Breast epithelium (tissue), 4 donors: ENCODE measurements at regions of chr11 and their contacts with region 1.

Region 1: GRCh38 chr11:62081378-62082291 is 42.2 kb upstream of the INCENP start:
- DNase-seq: peak; percentile 63 to 86
- H3K4me3 ChIP-seq: peak overlapping the region in 1 of 3 donors; percentile 31
- H3K27ac ChIP-seq: no peak overlapping the region
- H3K4me1 ChIP-seq: no peaks in the 10 kb centered on the region
- H3K27me3 ChIP-seq: no peaks in the 10 kb centered on the region
- CTCF ChIP-seq: peak; percentile 90 to 92 (median 91)
- POLR2A ChIP-seq: no peak

Region 2: GRCh38 chr11:61792310-61793085 is 289.1 kb before region 1 on chr11 and contains the starts of genes FEN1 and TMEM258:
- intact Hi-C with region 1: loop called (anchors 10 kb)
- DNase-seq: peak; percentile 90 to 92
- H3K4me3 ChIP-seq: peak within 1 kb of the TSS; percentile 74 to 89 (median 79)
- H3K27ac ChIP-seq: peak within 1 kb of the TSS; percentile 94 to 97
- H3K4me1 ChIP-seq: no peaks in the 10 kb centered on the region
- H3K27me3 ChIP-seq: no peaks in the 10 kb centered on the region
- CTCF ChIP-seq: peak; percentile 5 to 48 (median 21)
- POLR2A ChIP-seq: peak; percentile 80
- total RNA-seq, gene FEN1: 5.9 to 9.2 (median 8.5) TPM
- total RNA-seq, gene TMEM258: 35.4 to 55.4 (median 35.7) TPM

Region 3: GRCh38 chr11:61860054-61860903 is 221.4 kb before region 1 on chr11:
- intact Hi-C with region 1: no loop called
- DNase-seq: peak in 1 of 2 donors; percentile 40
- H3K4me3 ChIP-seq: no peak overlapping the region
- H3K27ac ChIP-seq: no peak overlapping the region
- H3K4me1 ChIP-seq: no peaks in the 10 kb centered on the region
- H3K27me3 ChIP-seq: no peaks in the 10 kb centered on the region
- CTCF ChIP-seq: no peak
- POLR2A ChIP-seq: no peak

Region 4: DNA sequence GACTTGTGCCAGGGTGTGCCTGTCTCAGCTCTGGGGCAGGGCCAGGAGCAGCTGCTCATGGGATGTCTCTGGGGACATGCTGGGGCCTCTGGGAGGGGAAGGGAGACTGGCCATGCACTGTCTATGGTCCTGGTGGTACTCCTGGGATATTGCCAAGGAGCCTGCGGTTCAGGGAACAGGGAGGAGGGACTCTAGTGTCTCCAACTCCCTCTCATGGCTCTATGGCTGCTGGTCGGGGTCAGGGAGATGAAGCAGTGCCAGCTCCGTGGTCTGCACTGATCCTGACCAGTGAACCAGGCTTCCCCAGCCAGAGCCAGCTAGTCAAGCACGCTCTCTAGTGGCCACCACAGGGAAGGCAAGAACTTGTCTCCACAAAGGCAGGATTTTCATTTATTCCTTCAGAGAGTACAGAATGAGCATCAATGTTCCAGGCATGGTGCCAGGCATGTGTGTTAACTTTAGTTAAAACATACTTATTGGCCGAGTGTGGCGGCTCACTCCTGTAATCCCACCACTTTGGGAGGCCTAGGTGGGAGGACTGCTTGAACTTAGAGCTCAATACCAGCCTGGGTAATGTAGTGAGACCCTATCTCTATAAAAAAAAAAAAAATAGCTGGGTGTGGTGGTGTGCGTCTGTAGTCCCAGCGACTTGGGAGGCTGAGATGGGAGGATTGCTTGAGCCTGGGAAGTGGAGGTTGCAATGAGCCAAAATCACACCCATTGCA is 134.0 kb before region 1 on chr11:
- intact Hi-C with region 1: loop called (anchors 10 kb)
- DNase-seq: peak; percentile 83 to 86
- H3K4me3 ChIP-seq: no peak overlapping the region
- H3K27ac ChIP-seq: peak overlapping the region in 1 of 2 donors; percentile 65
- H3K4me1 ChIP-seq: no peaks in the 10 kb centered on the region
- H3K27me3 ChIP-seq: no peaks in the 10 kb centered on the region
- CTCF ChIP-seq: peak; percentile 82 to 92 (median 87)
- POLR2A ChIP-seq: no peak